Heart left ventricle (tissue), 16 donors: ENCODE measurements at regions of chr16 and their contacts with region 1.

Region 1: GRCh38 chr16:30984669-30985400 is at the start of gene HSD3B7:
- DNase-seq: peak; percentile 90 to 95 (median 90)
- ATAC-seq: peak; percentile 83 to 91 (median 88)
- H3K4me3 ChIP-seq: peak within 1 kb of the TSS in 11 of 12 donors; percentile 24 to 79 (median 61)
- H3K27ac ChIP-seq: peak within 1 kb of the TSS in 10 of 12 donors; percentile 26 to 82 (median 66)
- H3K4me1 ChIP-seq: peaks cover 0 to 21% (median 11%) of the 10 kb centered on the region in 12 donors
- H3K27me3 ChIP-seq: no peaks in the 10 kb centered on the region
- CTCF ChIP-seq: peak; percentile 92 to 97 (median 96)
- POLR2A ChIP-seq: peak in 1 of 2 donors; percentile 32
- total RNA-seq, gene HSD3B7: 3.8 to 27.2 (median 6.9) TPM

Region 2: GRCh38 chr16:30761928-30762810 is 222.7 kb before region 1 on chr16 and contains the starts of genes CFAP119 and RNF40:
- intact Hi-C with region 1: no loop called
- DNase-seq: peak; percentile 96 to 97 (median 97)
- ATAC-seq: peak; percentile 93 to 98 (median 94)
- H3K4me3 ChIP-seq: peak within 1 kb of the TSS; percentile 70 to 99 (median 92)
- H3K27ac ChIP-seq: peak within 1 kb of the TSS; percentile 48 to 97 (median 90)
- H3K4me1 ChIP-seq: peaks cover 0 to 48% (median 34%) of the 10 kb centered on the region in 12 donors
- H3K27me3 ChIP-seq: no peaks in the 10 kb centered on the region
- CTCF ChIP-seq: no peak
- POLR2A ChIP-seq: peak; percentile 57 to 88
- total RNA-seq, gene CFAP119: 0.48 to 1.8 (median 0.95) TPM
- total RNA-seq, gene RNF40: 29.3 to 62.0 (median 50.3) TPM

Region 3: GRCh38 chr16:31032736-31033708 is 48.2 kb after region 1 on chr16 and contains the start of gene STX4:
- intact Hi-C with region 1: loop called in 2 of 10 experiments (anchors 5 kb)
- DNase-seq: peak; percentile 98 to 99 (median 98)
- ATAC-seq: peak; percentile 93 to 95 (median 94)
- H3K4me3 ChIP-seq: peak within 1 kb of the TSS; percentile 73 to 100 (median 90)
- H3K27ac ChIP-seq: peak within 1 kb of the TSS; percentile 91 to 99 (median 96)
- H3K4me1 ChIP-seq: peaks cover 4 to 31% (median 18%) of the 10 kb centered on the region in 12 donors
- H3K27me3 ChIP-seq: no peaks in the 10 kb centered on the region
- CTCF ChIP-seq: no peak
- POLR2A ChIP-seq: no peak
- total RNA-seq, gene STX4: 19.5 to 65.8 (median 39.7) TPM

Region 4: GRCh38 chr16:31094424-31095120 is 109.7 kb after region 1 on chr16 and contains the start of gene VKORC1:
- intact Hi-C with region 1: loop called in 6 of 10 experiments (anchors 5 to 10 kb)
- DNase-seq: peak; percentile 95 to 97 (median 96)
- ATAC-seq: peak; percentile 92 to 98 (median 96)
- H3K4me3 ChIP-seq: peak within 1 kb of the TSS; percentile 72 to 95 (median 84)
- H3K27ac ChIP-seq: peak within 1 kb of the TSS; percentile 44 to 93 (median 88)
- H3K4me1 ChIP-seq: peaks cover 0 to 26% (median 18%) of the 10 kb centered on the region in 12 donors
- H3K27me3 ChIP-seq: no peaks in the 10 kb centered on the region
- CTCF ChIP-seq: no peak
- POLR2A ChIP-seq: peak in 1 of 2 donors; percentile 72
- total RNA-seq, gene VKORC1: 25.9 to 63.1 (median 42.0) TPM

Region 5: DNA sequence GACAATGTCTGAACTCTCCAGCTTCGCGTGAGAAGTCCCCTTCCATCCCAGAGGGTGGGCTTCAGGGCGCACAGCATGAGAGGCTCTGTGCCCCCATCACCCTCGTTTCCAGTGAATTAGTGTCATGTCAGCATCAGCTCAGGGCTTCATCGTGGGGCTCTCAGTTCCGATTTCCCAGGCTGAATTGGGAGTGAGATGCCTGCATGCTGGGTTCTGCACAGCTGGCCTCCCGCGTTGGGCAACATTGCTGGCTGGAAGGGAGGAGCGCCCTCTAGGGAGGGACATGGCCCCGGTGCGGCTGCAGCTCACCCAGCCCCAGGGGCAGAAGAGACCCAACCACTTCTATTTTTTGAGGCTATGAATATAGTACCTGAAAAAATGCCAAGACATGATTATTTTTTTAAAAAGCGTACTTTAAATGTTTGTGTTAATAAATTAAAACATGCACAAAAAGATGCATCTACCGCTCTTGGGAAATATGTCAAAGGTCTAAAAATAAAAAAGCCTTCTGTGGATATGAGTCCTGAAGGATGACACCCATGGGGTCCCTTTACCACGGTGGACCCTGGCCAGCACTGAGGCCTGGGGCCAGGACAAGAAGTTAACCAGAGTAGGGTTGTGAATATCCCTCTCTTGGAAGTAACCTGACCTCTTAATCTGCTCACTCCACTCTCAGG is 397.8 kb after region 1 on chr16:
- intact Hi-C with region 1: loop called in 1 of 10 experiments (anchors 10 kb)
- DNase-seq: peak; percentile 68 to 86 (median 76)
- ATAC-seq: peak; percentile 50 to 91 (median 86)
- H3K4me3 ChIP-seq: no peak overlapping the region
- H3K27ac ChIP-seq: no peak overlapping the region
- H3K4me1 ChIP-seq: no peaks in the 10 kb centered on the region
- H3K27me3 ChIP-seq: peaks cover 0 to 27% (median 0%) of the 10 kb centered on the region in 9 donors
- CTCF ChIP-seq: peak; percentile 45 to 74 (median 64)
- POLR2A ChIP-seq: no peak

Region 6: DNA sequence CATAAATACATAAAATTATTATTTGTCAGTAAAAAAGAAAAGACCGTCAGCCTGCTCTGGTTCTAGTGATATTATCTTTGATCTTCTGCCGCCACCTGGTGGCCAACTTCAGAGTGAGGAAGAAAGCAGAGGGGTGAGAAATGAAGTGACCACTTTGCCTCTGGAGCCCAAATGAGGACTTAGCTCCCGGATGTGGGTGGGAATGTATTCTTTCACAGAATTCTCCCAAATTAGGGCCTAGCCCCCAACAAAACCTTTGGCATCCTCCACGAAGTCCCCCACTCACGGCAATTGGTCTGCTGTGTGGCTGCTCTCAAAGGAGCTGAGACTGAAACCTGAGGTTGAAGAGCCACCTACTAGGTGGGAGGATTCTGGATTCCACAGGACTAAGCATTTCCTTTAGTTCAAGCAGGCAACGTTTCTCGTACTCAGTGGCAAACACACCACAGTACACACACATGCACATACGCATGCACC is 883.9 kb after region 1 on chr16:
- intact Hi-C with region 1: loop called (anchors 1 to 10 kb)
- DNase-seq: peak; percentile 72 to 84 (median 77)
- ATAC-seq: peak in 3 of 4 donors; percentile 55 to 69 (median 64)
- H3K4me3 ChIP-seq: peak overlapping the region in 2 of 12 donors; percentile 13 to 37
- H3K27ac ChIP-seq: peak overlapping the region in 4 of 12 donors; percentile 14 to 91 (median 18)
- H3K4me1 ChIP-seq: peaks cover 0 to 36% (median 8%) of the 10 kb centered on the region in 12 donors
- H3K27me3 ChIP-seq: no peaks in the 10 kb centered on the region
- CTCF ChIP-seq: peak; percentile 75 to 89 (median 80)
- POLR2A ChIP-seq: no peak